Activated T-helper 1 cell treated with anti-CD3 and anti-CD28 coated beads, Interleukin-12 subunit alpha, Interleukin-12 subunit beta, Interleukin-2, Interleukin-4 antibody, amounts not matched to agents 30 ng/mL and 10 ng/mL and 1 ng/mL, durations not matched to agents 14 hours and 24 hours and 36 hours (primary cell): ENCODE measurements at regions of chr11 and their contacts with region 1.

Region 1: GRCh38 chr11:33065445-33066178 is 26.2 kb downstream of the TCP11L1 start:
- DNase-seq: peak; percentile 47
- H3K4me3 Mint-ChIP-seq: no peak overlapping the region
- H3K27ac Mint-ChIP-seq: no peak overlapping the region
- H3K4me1 Mint-ChIP-seq: peaks cover 49% of the 10 kb centered on the region
- H3K27me3 Mint-ChIP-seq: no peaks in the 10 kb centered on the region

Region 2: GRCh38 chr11:32809313-32809712 is 256.3 kb before region 1 on chr11:
- intact Hi-C with region 1: loop called (anchors 1 kb)
- DNase-seq: peak; percentile 12
- H3K4me3 Mint-ChIP-seq: no peak overlapping the region
- H3K27ac Mint-ChIP-seq: no peak overlapping the region
- H3K4me1 Mint-ChIP-seq: no peaks in the 10 kb centered on the region
- H3K27me3 Mint-ChIP-seq: peaks cover 10% of the 10 kb centered on the region

Region 3: GRCh38 chr11:32884770-32885384 is 180.7 kb before region 1 on chr11:
- intact Hi-C with region 1: loop called (anchors 1 kb)
- DNase-seq: no peak
- H3K4me3 Mint-ChIP-seq: no peak overlapping the region
- H3K27ac Mint-ChIP-seq: no peak overlapping the region
- H3K4me1 Mint-ChIP-seq: no peaks in the 10 kb centered on the region
- H3K27me3 Mint-ChIP-seq: peaks cover 15% of the 10 kb centered on the region

Region 4: GRCh38 chr11:33015621-33016551 is 49.7 kb before region 1 on chr11 and contains the start of gene DEPDC7:
- intact Hi-C with region 1: loop called (anchors 1 kb)
- DNase-seq: peak; percentile 66
- H3K4me3 Mint-ChIP-seq: peak within 1 kb of the TSS; percentile 79
- H3K27ac Mint-ChIP-seq: no peak within 1 kb of the TSS
- H3K4me1 Mint-ChIP-seq: peaks cover 18% of the 10 kb centered on the region
- H3K27me3 Mint-ChIP-seq: peaks cover 41% of the 10 kb centered on the region
- total RNA-seq, gene DEPDC7: 0.26 and 0.61 TPM in 2 replicates